HEK293 (cell line): ENCODE measurements at regions of chr6 and their contacts with region 1.

Region 1: GRCh38 chr6:44172731-44173500 is 14.3 kb downstream of the CAPN11 start:
- H3K4me3 ChIP-seq: no peak overlapping the region
- H3K27ac ChIP-seq: no peak overlapping the region
- H3K4me1 ChIP-seq: no peaks in the 10 kb centered on the region
- CTCF ChIP-seq: peak; percentile 83

Region 2: DNA sequence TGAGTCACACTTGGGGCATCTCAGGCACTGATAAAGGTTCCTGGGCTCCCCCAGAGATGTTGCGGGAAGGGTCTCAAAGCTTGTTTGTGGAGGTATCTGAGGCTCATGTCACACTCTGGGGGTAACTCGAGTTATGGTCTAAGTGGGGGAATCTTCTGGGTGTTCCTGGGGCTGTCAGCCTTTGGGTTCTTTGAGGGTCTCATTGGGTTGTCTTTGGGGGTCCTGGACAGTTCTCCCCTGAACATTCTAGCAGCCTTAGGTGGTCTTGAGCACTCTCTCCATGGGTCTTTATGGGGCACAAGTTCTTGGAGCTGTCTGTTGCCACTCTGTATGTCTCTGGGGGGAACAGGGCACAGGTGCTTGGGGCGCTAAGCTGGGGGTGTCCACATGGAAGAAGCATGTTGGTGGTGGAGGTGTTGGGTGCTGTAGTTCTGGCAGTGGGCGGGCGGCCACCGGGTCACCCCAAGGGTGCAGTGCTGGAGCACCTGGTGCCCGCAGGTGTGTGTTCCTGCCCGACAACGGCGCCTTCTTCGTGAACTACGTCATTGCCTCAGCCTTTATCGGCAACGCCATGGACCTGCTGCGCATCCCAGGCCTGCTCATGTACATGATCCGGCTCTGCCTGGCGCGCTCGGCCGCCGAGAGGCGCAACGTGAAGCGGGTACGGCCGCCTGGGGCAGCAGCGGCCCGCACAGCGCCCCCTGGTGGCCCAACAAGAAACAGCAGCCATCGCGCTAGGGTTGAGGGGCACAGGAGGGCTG is 21.4 kb before region 1 on chr6:
- CTCF ChIA-PET with region 1: interaction called, 13 read pairs
- POLR2A ChIA-PET with region 1: interaction called, 4 read pairs
- H3K4me3 ChIP-seq: no peak overlapping the region
- H3K27ac ChIP-seq: no peak overlapping the region
- H3K4me1 ChIP-seq: no peaks in the 10 kb centered on the region
- CTCF ChIP-seq: peak; percentile 99

Region 3: DNA sequence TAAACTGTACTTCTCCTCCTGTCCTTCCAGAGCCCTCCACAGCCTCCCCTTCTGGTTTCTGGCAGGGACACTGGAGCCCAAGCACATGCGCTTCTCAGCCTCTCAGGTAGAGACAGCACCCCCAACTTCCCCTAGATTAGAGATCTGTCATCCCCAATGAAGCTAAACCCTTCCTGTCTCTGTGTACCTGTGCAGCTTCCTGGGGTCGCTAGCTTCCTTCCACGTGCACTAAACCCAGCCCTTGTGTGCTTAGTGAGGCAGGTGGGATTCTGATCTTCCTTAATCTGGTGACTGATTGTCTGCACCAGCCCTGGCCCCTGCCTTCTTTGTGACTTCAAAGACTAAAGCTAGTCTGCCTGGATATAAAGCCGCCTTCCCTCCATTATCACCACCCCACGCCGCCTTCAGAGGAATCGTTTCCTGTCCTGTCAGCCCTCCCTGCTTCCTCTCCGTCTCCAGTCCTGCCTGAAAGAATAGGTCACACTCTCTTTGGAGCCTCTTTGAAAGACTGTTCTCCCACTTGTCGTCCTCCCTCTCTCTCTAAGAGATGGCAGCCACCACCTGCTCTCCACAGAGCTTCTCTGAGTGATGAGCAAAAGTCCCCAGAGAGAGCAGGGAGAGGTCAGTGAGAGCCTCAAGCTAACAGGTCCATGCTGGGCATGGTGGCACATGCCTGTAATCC is 13.2 kb after region 1 on chr6:
- CTCF ChIA-PET with region 1: interaction called, 32 read pairs
- POLR2A ChIA-PET with region 1: interaction called, 7 read pairs
- H3K4me3 ChIP-seq: no peak overlapping the region
- H3K27ac ChIP-seq: no peak overlapping the region
- H3K4me1 ChIP-seq: no peaks in the 10 kb centered on the region
- CTCF ChIP-seq: no peak

Region 4: GRCh38 chr6:44221291-44221960 is 48.5 kb after region 1 on chr6:
- CTCF ChIA-PET with region 1: interaction called, 29 read pairs
- POLR2A ChIA-PET with region 1: interaction called, 11 read pairs
- H3K4me3 ChIP-seq: no peak overlapping the region
- H3K27ac ChIP-seq: peak overlapping the region; percentile 60
- H3K4me1 ChIP-seq: peaks cover 23% of the 10 kb centered on the region
- CTCF ChIP-seq: peak; percentile 92

Region 5: GRCh38 chr6:44246663-44247337 is 73.9 kb after region 1 on chr6 and contains the start of gene HSP90AB1:
- CTCF ChIA-PET with region 1: interaction called, 21 read pairs
- POLR2A ChIA-PET with region 1: interaction called, 10 read pairs
- H3K4me3 ChIP-seq: peak within 1 kb of the TSS; percentile 66
- H3K27ac ChIP-seq: peak within 1 kb of the TSS; percentile 71
- H3K4me1 ChIP-seq: no peaks in the 10 kb centered on the region
- CTCF ChIP-seq: peak; percentile 31; the same call in 1 of the 2 replicates

Region 6: DNA sequence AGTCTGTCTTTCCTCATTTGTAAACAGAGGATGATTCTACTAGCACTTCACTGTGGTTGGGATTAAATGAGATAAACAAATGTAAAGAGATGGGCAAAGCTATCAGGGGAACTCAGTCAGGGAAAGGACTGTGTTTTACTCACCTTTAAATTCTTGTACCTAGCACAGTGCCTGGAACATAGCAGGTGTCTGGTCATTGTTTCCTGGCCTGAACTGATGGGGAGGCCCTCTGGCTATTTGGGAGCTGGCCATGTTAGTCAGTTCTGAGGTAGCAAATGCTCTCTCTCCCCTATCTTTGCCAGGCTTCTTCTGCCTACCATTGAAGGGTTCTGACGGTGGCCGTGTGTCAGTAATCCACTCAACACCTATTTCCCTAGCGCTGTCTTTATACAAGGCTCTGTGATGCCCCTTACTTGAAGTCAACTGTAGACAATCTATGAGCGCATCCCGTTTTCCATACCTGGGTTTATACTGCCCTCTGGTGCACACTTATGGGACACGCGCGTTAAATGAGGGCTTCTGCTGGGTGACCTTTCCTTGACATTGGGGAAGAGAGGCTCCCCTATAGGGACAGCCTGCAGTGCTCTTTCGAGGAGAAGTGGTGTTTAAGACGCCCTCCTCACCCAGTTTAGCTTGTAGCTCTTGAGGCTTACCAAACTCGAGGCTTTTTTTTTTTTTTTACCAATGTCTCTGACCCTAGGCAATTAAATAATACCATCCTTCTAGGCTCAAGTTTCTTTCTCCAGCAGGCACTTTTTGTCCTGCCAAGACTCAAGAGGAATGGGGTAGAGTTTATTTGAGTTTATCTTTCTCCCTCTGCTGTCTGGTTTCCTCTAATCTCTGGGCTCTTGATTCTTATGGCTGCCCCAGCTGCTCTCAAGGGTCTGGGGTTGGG is 165.6 kb after region 1 on chr6:
- CTCF ChIA-PET with region 1: interaction called, 21 read pairs
- POLR2A ChIA-PET with region 1: no interaction called
- H3K4me3 ChIP-seq: no peak overlapping the region
- H3K27ac ChIP-seq: no peak overlapping the region
- H3K4me1 ChIP-seq: no peaks in the 10 kb centered on the region; the same call in 1 of the 2 replicates
- CTCF ChIP-seq: peak; percentile 78

Region 7: GRCh38 chr6:44377971-44378370 is 205.1 kb after region 1 on chr6:
- CTCF ChIA-PET with region 1: no interaction called
- POLR2A ChIA-PET with region 1: no interaction called
- H3K4me3 ChIP-seq: no peak overlapping the region
- H3K27ac ChIP-seq: no peak overlapping the region
- H3K4me1 ChIP-seq: no peaks in the 10 kb centered on the region
- CTCF ChIP-seq: no peak